ENCODE measurements at regions of chr9 and their contacts with region 1.

Region 1: DNA sequence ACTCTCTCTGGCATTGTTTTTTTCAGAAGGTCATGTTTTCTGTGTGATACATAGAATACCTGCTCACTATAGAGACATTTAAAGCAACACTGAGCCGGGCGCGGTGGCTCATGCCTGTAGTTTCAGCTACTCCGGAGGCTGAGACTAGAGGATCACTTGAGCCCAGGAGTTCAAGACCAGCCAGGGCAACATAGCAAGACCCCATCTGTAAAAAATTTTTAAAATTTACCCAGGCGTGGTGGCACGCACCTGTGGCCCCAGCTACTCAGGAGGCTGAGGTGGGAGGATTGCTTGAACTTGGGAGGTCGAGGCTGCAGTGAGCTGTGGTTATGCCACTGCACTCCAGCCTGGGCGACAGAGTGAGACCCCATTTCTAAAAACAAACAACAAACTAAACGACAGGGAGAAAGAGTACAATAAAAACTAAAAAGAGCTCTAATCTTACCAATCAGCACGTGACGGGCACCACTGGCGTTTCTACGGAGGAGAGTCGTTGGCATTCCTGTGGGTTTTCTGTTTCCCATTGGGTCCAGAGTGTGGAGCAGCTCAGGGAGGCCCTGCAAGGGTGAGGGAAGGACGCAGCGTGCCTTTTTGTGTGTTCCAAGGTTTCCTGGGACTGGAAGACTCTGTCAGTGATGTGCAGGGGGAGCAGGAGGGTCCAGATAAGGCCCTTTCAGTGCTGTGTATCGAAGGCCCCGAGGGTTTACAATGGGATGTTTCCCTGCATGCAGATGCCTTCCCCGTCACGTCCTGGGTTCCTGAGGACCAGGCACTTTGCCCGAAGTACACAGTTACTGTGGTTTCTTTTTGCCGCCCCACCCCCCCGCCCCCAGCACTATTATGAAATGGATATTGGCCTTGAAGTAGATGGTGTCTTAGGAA is 7.2 kb upstream of the RNU6ATAC start:
- DNase-seq: no peak
- H3K4me3 ChIP-seq: no peak overlapping the region
- H3K27ac ChIP-seq: peak overlapping the region in 3 of 4 donors; percentile 24 to 59 (median 55)
- H3K4me1 ChIP-seq: peaks cover 15 to 25% (median 15%) of the 10 kb centered on the region in 3 donors
- H3K27me3 ChIP-seq: peaks cover 0 to 31% (median 0%) of the 10 kb centered on the region in 4 donors
- CTCF ChIP-seq: no peak
- POLR2A ChIP-seq: no peak

Region 2: DNA sequence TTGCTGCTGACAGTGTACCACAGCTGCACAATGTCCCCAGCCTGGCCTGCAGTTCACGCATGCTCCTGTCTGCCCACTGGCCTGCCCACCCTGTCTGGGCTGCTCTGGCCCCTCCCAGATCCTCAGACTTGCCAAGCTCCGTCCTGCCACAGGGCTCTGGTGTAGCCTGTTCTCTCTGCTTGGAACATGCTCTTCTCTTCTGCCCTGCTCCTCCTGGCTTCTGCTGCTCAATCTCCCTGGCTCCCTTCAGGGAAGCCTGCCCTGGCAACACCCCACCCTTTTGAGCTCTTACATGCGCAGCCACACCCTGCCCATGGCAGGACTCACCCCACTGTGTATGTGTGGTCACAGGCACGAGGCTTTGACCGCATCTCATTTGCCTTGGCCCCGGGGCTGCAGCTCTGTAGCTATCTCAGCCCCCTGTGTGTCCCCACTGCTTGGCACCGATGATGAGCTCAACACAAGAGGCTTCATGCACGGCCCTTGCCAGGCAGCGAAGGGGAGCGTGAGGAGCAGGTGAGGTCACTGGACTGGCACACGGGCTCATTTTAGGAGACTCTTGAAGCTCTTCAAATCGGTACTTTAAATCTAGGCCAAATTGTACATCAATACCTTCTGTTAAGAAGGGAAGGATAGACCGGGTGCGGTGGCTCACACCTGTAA is 83.4 kb before region 1 on chr9:
- intact Hi-C with region 1: no loop called
- DNase-seq: no peak
- H3K4me3 ChIP-seq: no peak overlapping the region
- H3K27ac ChIP-seq: no peak overlapping the region
- H3K4me1 ChIP-seq: peaks cover 0 to 7% (median 0%) of the 10 kb centered on the region in 3 donors
- H3K27me3 ChIP-seq: peaks cover 0 to 4% (median 0%) of the 10 kb centered on the region in 4 donors
- CTCF ChIP-seq: no peak
- POLR2A ChIP-seq: no peak

Region 3: DNA sequence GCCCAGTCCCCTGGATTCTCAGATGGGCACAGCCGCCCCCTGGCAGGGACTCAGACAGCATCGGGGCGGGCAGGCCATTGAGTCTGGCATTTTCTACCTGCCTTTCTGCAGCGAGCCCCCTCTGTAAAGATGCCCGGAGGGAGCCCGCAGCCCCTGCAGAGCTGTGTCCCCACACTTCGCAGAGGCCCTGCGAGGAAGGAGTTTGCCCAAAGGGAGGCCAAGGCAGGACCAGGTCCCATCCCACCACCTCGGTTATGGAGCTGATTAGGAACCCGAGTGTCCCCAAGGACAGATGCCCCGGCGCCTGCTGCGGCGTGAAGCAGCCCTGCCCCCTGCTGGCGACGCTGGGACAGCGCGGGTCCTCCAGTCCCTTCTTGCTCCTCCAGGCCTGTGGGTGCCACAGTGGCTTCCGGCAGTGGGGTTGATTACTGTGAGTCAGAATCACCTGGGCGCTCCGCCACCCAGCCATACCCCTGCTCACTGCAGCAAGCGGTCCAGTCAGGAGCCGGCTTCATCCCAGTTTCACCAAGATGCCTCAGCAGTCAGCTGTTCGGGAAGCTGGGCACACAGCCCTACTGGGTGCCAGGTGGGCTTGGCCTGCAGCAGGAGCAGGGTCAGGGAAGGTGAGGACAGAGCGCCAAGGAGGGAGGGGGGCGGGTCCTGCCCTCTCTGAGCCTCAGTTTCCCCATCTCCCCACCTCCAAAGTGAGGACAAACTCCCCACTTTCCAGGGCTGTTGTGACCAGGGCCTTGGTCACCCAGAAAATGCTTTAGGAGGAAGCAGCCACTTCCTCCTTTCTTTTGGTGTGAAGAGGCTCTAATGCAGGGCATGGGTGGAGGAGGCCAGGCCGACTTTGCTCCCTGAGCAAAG is 271.8 kb after region 1 on chr9:
- intact Hi-C with region 1: loop called (anchors 2 kb)
- DNase-seq: peak; percentile 39
- H3K4me3 ChIP-seq: no peak overlapping the region
- H3K27ac ChIP-seq: peak overlapping the region in 3 of 4 donors; percentile 41 to 65 (median 55)
- H3K4me1 ChIP-seq: peaks cover 24 to 45% (median 27%) of the 10 kb centered on the region in 3 donors
- H3K27me3 ChIP-seq: peaks cover 0 to 12% (median 0%) of the 10 kb centered on the region in 4 donors
- CTCF ChIP-seq: peak; percentile 97 to 100 (median 99)
- POLR2A ChIP-seq: no peak

Region 4: GRCh38 chr9:134502809-134503211 is 331.3 kb after region 1 on chr9:
- intact Hi-C with region 1: no loop called
- DNase-seq: no peak
- H3K4me3 ChIP-seq: no peak overlapping the region
- H3K27ac ChIP-seq: no peak overlapping the region
- H3K4me1 ChIP-seq: peaks cover 0 to 15% (median 0%) of the 10 kb centered on the region in 3 donors
- H3K27me3 ChIP-seq: peaks cover 0 to 50% (median 11%) of the 10 kb centered on the region in 4 donors
- CTCF ChIP-seq: no peak
- POLR2A ChIP-seq: no peak